Keratinocyte (primary cell): ENCODE measurements at regions of chr12 and their contacts with region 1.

Region 1: DNA sequence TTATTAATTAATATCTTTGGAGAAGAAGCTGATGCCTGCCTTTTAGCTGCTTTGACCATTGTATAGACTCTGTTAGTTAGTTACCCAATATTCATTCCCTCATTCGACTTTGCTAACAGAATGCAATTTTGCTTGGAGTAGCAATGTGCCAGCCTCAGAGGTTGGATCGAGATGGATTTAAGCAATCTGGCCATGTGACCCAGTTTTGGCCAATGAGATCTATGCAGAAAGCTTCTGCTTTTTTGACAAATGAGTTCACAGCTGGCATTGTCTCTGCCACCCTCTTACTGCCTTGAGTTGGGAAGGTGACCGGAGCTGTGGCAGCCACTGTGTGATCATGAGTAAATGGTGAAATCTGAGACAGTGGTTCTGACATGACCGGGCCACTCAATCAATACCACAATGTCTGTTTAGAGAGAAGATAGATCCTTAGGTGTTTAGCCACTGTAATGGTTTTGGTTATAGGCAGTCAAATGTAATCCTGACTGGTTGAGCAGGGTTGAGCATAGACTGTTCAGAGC is 74.9 kb upstream of the MED13L start:
- DNase-seq: no peak
- H3K4me3 ChIP-seq: no peak overlapping the region
- H3K27ac ChIP-seq: no peak overlapping the region
- H3K4me1 ChIP-seq: no peaks in the 10 kb centered on the region
- H3K27me3 ChIP-seq: no peaks in the 10 kb centered on the region
- CTCF ChIP-seq: no peak

Region 2: GRCh38 chr12:116026768-116027550 is 325.4 kb before region 1 on chr12:
- dilution Hi-C with region 1: no loop called
- DNase-seq: no peak
- H3K4me3 ChIP-seq: no peak overlapping the region
- H3K27ac ChIP-seq: no peak overlapping the region
- H3K4me1 ChIP-seq: peaks cover 2% of the 10 kb centered on the region
- H3K27me3 ChIP-seq: no peaks in the 10 kb centered on the region
- CTCF ChIP-seq: no peak

Region 3: GRCh38 chr12:116282371-116283286 is 69.7 kb before region 1 on chr12:
- dilution Hi-C with region 1: loop called (anchors 5 kb)
- DNase-seq: no peak
- H3K4me3 ChIP-seq: no peak overlapping the region
- H3K27ac ChIP-seq: no peak overlapping the region
- H3K4me1 ChIP-seq: no peaks in the 10 kb centered on the region
- H3K27me3 ChIP-seq: no peaks in the 10 kb centered on the region
- CTCF ChIP-seq: no peak